Activated naive CD4-positive, alpha-beta T cell treated with anti-CD3 and anti-CD28 coated beads for 36 hours (primary cell): ENCODE measurements at regions of chrX and their contacts with region 1.

Region 1: GRCh38 chrX:148658115-148658730 is 157.8 kb downstream of the AFF2 start:
- DNase-seq: peak; percentile 3
- H3K4me3 Mint-ChIP-seq: no peak overlapping the region
- H3K27ac Mint-ChIP-seq: no peak overlapping the region
- H3K4me1 Mint-ChIP-seq: peaks cover 10% of the 10 kb centered on the region
- H3K27me3 Mint-ChIP-seq: no peaks in the 10 kb centered on the region

Region 2: DNA sequence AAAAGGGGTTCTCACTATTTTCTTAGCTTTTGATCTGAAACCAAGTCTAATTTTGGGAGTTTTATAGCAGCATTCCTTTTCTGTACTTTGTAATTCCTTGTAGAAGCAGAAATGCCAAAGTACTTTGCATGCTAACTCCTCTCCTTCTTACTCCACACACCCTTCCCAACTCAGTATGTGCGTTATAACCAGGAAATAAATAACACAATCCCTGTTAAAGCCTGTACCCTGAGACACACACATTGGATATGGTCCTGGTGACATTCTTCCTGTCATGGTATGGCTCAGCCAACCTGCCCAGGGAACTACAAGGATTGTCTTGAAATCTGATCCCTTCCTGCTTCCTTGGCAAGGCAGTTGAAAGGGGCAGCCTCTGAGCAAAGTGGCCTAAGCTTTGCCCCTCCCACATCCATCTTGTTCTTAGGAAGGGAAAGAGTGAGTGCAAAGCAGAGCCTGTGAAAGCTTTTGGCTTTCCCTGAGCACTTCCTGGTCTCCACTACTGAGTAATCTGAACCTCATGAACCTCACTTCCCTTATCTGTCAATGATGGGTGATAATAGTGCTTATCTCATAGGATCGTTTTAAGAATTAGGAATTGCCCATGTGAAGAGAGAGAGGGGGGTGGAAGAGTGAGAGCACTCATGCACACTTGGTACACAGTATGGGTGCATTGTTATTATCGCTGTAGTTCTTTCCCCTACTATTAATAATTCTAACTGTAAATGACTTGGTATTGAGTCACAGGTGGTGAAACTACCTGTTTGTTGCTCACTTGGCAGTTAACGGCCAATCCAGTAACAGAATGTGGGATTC is 48.5 kb before region 1 on chrX:
- CTCF ChIA-PET with region 1: no interaction called
- intact Hi-C with region 1: loop called (anchors 2 kb)
- DNase-seq: peak; percentile 4
- H3K4me3 Mint-ChIP-seq: peak overlapping the region; percentile 4
- H3K27ac Mint-ChIP-seq: no peak overlapping the region
- H3K4me1 Mint-ChIP-seq: peaks cover 27% of the 10 kb centered on the region
- H3K27me3 Mint-ChIP-seq: no peaks in the 10 kb centered on the region